ENCODE measurements at regions of chr2 and their contacts with region 1.

Region 1: DNA sequence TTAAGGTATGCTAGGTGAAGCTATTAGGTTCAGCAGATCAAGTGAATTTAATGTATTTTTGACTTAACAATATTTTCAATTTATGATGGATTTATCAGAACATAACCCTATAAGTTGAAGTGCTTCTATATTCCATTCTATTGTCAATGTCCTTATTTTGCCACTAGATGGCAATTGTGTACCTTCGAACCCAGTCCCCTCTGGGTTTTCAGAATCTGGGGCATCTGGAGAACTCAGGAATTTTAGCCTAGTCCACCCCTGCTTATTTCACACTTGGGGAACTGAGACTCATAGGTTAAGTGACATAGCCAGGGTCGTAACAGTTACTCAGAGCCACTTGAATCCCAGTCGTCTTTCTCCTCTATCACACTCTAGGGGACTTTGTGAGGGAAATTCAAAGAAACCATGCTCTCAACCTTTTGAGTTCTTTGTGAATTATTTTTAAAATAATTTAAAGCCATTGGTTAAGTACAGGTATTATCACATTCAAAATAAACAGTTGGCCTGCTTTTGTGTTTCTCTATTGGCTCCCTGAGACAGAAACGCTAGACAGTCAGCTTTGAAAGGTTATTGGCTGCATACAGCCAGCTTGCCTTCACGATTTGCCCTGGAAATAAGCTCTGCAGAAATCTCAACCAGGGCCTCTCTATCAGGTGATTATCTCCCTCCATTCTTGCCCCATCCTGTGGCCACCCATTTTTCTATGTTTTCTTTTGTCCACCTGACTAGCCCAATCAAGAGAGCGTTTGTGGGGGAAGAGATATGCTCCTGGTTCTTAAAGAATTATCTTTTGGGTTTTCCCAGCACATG is 145.0 kb downstream of the TTC27 start:
- DNase-seq: no peak
- H3K4me3 ChIP-seq: no peak overlapping the region
- H3K27ac ChIP-seq: peak overlapping the region; percentile 33
- H3K4me1 ChIP-seq: peaks cover 56% of the 10 kb centered on the region
- H3K27me3 ChIP-seq: no peaks in the 10 kb centered on the region
- CTCF ChIP-seq: peak; percentile 81

Region 2: GRCh38 chr2:32895424-32895823 is 122.6 kb after region 1 on chr2:
- intact Hi-C with region 1: no loop called
- DNase-seq: no peak
- H3K4me3 ChIP-seq: no peak overlapping the region
- H3K27ac ChIP-seq: no peak overlapping the region
- H3K4me1 ChIP-seq: peaks cover 7% of the 10 kb centered on the region
- H3K27me3 ChIP-seq: no peaks in the 10 kb centered on the region
- CTCF ChIP-seq: no peak

Region 3: GRCh38 chr2:32946314-32947075 is 173.7 kb after region 1 on chr2 and contains the start of gene LTBP1:
- intact Hi-C with region 1: loop called (anchors 10 kb)
- DNase-seq: peak; percentile 83
- H3K4me3 ChIP-seq: peak within 1 kb of the TSS; percentile 93
- H3K27ac ChIP-seq: peak within 1 kb of the TSS; percentile 95
- H3K4me1 ChIP-seq: peaks cover 60% of the 10 kb centered on the region
- H3K27me3 ChIP-seq: no peaks in the 10 kb centered on the region
- CTCF ChIP-seq: peak; percentile 85
- total RNA-seq, gene LTBP1: 88.9 TPM

Region 4: GRCh38 chr2:33033606-33034081 is 260.8 kb after region 1 on chr2:
- intact Hi-C with region 1: loop called (anchors 10 kb)
- DNase-seq: no peak
- H3K4me3 ChIP-seq: peak overlapping the region; percentile 43
- H3K27ac ChIP-seq: peak overlapping the region; percentile 21
- H3K4me1 ChIP-seq: peaks cover 27% of the 10 kb centered on the region
- H3K27me3 ChIP-seq: no peaks in the 10 kb centered on the region
- CTCF ChIP-seq: peak; percentile 69